ENCODE measurements at regions of chr19 and their contacts with region 1.

Region 1: DNA sequence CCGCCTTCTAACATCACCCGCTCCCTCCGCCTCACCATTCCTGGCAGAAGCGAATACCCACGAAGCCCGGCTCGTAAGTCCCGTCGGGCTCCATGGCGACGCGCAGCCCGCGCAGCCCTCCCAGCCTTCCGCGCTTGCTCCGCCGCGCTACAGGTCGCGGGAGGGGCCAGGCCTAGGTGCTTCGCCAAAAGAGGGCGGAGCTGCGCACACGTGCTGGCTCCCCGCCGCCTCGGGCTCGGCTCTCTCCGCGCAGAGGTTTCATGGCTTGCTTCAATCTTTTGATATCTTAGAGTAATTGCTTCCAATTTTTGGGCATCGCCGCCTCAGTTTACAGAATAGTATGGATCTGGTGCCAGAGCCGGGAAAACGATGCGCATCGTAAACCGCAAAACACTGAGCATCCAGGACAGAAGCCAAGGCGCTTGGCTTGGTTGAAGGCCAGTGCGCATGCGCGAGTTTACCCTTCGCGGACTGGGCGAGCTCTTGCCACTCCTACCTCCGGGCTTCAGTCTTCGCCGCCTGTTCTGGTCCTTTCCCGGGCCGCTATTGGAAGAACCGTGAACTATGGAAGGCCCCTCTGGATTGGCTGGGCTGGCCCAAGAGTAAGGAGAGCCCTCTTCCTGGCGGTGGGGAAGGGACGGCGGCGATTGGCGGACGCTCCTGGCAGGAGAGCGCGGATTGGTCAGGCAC is at the start of gene POLR2I:
- DNase-seq: peak; percentile 100
- ATAC-seq: peak; percentile 85 to 96
- H3K4me3 ChIP-seq: peak within 1 kb of the TSS; percentile 75
- H3K27ac ChIP-seq: peak within 1 kb of the TSS; percentile 89 to 91
- H3K4me1 ChIP-seq: peaks cover 25% of the 10 kb centered on the region
- CTCF ChIP-seq: no peak
- EP300 ChIP-seq: no peak
- POLR2A ChIP-seq: peak; percentile 89
- RAD21 ChIP-seq: no peak
- polyA plus RNA-seq, gene POLR2I: 107 and 123 TPM in 2 replicates

Region 2: DNA sequence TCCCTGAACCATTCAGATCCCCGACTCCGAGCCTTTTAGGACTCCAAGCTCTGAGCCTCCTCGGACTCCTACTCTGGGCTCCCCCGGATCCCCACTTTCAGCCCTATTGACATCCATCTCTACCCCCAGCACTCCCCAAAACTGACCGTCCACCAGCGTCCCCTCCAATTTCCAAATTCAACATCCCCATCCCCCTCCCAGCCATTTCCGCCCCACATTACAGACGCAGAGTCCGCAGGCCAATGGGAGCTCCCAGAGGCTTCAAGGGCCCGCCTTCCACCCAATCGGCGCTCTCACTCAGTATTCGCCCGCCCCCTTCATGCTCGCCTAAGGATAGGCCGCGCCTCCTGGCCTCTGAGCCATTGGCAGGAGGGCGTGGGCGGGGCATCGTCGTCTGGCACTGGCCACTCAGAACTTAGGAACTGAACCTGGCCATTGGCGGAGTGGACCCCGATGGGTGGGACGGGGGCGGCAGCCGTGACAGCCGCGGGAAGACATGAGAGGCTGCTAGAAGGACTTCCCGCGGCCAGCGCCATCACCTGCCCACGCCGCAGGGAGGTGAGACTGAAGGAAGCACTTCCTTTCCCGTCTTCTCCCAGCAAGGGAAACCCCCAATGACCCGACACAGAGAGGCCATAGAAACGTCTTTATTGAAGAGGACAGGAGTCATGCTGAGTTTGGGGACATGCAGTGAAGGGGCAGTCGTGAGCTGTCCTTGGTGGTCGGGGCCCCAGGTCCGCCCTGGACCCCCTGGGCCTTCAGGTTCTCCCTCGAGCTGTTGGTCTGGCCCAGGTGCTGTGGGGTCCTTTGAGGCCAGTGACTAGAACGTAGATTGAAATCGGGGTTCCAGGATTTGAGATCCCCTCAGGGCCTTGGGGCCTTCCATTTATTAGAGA is 100.6 kb before region 1 on chr19 and contains the start of gene ALKBH6:
- CTCF ChIA-PET with region 1: no interaction called
- POLR2A ChIA-PET with region 1: interaction called, 14 read pairs
- DNase-seq: peak; percentile 100
- ATAC-seq: peak; percentile 88 to 98
- H3K4me3 ChIP-seq: peak within 1 kb of the TSS; percentile 65
- H3K27ac ChIP-seq: peak within 1 kb of the TSS; percentile 81 to 85
- H3K4me1 ChIP-seq: peaks cover 19% of the 10 kb centered on the region
- CTCF ChIP-seq: no peak
- EP300 ChIP-seq: no peak
- POLR2A ChIP-seq: peak; percentile 80
- RAD21 ChIP-seq: 0 out of 5 replicates have a peak, but pooled peaks of 1 of the 2 experiments have one; percentile 23
- polyA plus RNA-seq, gene ALKBH6: 27.5 and 34.2 TPM in 2 replicates

Region 3: GRCh38 chr19:36054119-36054732 is 60.7 kb before region 1 on chr19 and contains the start of gene THAP8:
- CTCF ChIA-PET with region 1: interaction called, 157 read pairs
- POLR2A ChIA-PET with region 1: interaction called, 57 read pairs
- DNase-seq: peak; percentile 100
- ATAC-seq: peak; percentile 82 to 88
- H3K4me3 ChIP-seq: peak within 1 kb of the TSS; percentile 84
- H3K27ac ChIP-seq: peak within 1 kb of the TSS; percentile 89 to 93
- H3K4me1 ChIP-seq: peaks cover 22% of the 10 kb centered on the region
- CTCF ChIP-seq: peak; percentile 54
- EP300 ChIP-seq: no peak; a peak in 1 of 5 replicates
- POLR2A ChIP-seq: peak; percentile 93
- RAD21 ChIP-seq: peak in 1 of 2 experiments; percentile 17; a peak in 2 of 5 replicates
- polyA plus RNA-seq, gene THAP8: 3.1 and 3.2 TPM in 2 replicates

Region 4: GRCh38 chr19:36103626-36104552 is 11.0 kb before region 1 on chr19:
- CTCF ChIA-PET with region 1: interaction called, 33 read pairs
- POLR2A ChIA-PET with region 1: interaction called, 52 read pairs
- DNase-seq: peak in 1 of 2 experiments; percentile 38
- ATAC-seq: peak; percentile 3 to 7; a peak in 4 of 6 replicates
- H3K4me3 ChIP-seq: no peak overlapping the region
- H3K27ac ChIP-seq: no peak overlapping the region
- H3K4me1 ChIP-seq: peaks cover 5% of the 10 kb centered on the region; the same call in 2 of the 3 replicates
- CTCF ChIP-seq: no peak
- EP300 ChIP-seq: no peak
- POLR2A ChIP-seq: no peak
- RAD21 ChIP-seq: no peak

Region 5: DNA sequence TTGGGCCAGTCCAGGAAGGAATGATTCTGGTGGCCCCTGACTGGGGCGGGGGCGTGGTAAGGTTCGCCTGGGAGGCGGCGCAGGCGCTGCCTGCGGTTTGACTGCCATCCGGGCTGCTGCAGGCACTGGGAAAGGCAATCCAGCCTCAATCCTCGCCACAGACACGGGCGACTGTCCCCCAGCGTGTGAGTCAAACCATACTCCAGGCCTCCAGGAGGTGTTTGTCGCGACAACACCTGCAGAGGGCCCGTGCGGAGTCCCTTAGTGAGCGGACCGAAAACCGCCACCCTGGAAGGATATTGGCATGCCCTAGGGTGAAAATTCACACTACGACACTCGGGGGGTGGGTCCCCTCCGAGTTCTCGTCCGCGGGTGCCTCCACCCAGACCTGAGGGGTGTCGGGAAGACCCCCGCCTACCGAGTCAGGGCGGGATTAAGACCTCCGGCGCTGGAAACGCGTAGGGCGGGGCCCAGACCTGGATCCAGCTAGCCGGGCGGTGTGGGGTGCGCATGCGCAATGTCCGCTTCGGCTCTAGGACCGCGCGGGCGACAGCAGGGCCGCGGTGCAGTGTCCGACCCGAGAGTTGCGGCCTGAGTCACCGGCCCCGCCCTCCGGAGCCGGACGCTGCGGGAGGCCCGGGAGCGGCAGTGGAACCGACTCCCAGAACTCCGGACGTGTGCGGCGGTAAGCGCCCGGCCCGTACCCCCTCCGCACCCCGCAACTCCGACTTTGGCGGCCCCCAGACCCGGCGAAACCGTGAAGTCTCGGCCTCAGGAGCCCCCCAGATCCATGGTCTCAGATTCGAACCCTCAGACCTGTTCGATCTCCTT is 24.8 kb after region 1 on chr19 and contains the start of gene CAPNS1:
- CTCF ChIA-PET with region 1: interaction called, 3 read pairs
- POLR2A ChIA-PET with region 1: interaction called, 25 read pairs
- DNase-seq: peak; percentile 99
- ATAC-seq: peak; percentile 77 to 85
- H3K4me3 ChIP-seq: peak within 1 kb of the TSS; percentile 75
- H3K27ac ChIP-seq: peak within 1 kb of the TSS; percentile 93 to 95
- H3K4me1 ChIP-seq: peaks cover 37% of the 10 kb centered on the region
- CTCF ChIP-seq: peak; percentile 17; the same call in 1 of the 3 replicates
- EP300 ChIP-seq: no peak; a peak in 1 of 5 replicates
- POLR2A ChIP-seq: peak; percentile 83
- RAD21 ChIP-seq: peak in 1 of 2 experiments; percentile 7; a peak in 1 of 5 replicates
- polyA plus RNA-seq, gene CAPNS1: 1,014 and 1,236 TPM in 2 replicates

Region 6: DNA sequence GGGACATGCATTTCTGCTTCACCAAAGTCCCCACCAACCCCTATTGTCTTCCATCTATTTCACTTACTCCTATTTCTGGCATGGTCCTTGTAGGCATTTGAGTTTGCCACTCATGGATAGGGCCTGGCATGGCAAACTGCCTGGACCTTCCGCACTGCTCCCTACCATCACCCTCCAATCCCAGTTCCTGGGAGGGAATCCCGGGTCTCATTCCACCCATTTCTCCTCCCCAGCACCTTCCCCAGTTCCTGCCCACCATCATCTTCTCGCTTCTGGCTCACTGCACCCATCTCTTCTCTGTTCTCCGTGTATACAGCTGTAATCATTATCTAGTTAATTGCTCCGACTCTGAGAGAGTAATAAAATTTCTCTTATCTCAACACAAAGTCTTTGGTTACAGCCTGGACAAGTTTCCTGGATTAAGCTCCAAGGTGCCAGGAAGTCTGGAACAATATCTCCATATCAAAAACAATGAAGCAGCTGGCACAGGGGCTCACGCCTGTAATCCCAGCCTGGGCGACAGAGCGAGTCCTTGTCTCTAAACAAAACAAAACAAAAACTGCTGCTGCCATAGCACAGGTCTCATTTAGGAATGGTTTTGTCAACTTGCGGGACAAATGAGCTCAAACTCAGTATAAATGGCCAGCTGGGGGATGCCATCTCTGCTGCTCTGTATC is 54.3 kb after region 1 on chr19:
- CTCF ChIA-PET with region 1: interaction called, 10 read pairs
- POLR2A ChIA-PET with region 1: interaction called, 3 read pairs
- DNase-seq: no peak
- ATAC-seq: no peak
- H3K4me3 ChIP-seq: no peak overlapping the region
- H3K27ac ChIP-seq: no peak overlapping the region
- H3K4me1 ChIP-seq: 0 out of 3 replicates have a peak, but pooled peaks cover 3% of the 10 kb centered on the region
- CTCF ChIP-seq: no peak
- EP300 ChIP-seq: no peak
- POLR2A ChIP-seq: no peak
- RAD21 ChIP-seq: no peak

Region 7: GRCh38 chr19:36182612-36183244 is 67.8 kb after region 1 on chr19:
- CTCF ChIA-PET with region 1: no interaction called
- POLR2A ChIA-PET with region 1: no interaction called
- DNase-seq: peak in 1 of 2 experiments; percentile 35
- ATAC-seq: peak; percentile 19 to 22; a peak in 3 of 6 replicates
- H3K4me3 ChIP-seq: no peak overlapping the region
- H3K27ac ChIP-seq: no peak overlapping the region
- H3K4me1 ChIP-seq: no peaks in the 10 kb centered on the region
- CTCF ChIP-seq: no peak
- EP300 ChIP-seq: no peak
- POLR2A ChIP-seq: no peak
- RAD21 ChIP-seq: no peak

Region 8: GRCh38 chr19:36214386-36215275 is 99.7 kb after region 1 on chr19 and contains the starts of genes ZNF146 and ZNF565:
- CTCF ChIA-PET with region 1: no interaction called
- POLR2A ChIA-PET with region 1: interaction called, 19 read pairs
- DNase-seq: peak; percentile 100
- ATAC-seq: peak; percentile 95 to 96
- H3K4me3 ChIP-seq: peak within 1 kb of the TSS; percentile 63
- H3K27ac ChIP-seq: peak within 1 kb of the TSS; percentile 87 to 91
- H3K4me1 ChIP-seq: 0 out of 3 replicates have a peak, but pooled peaks cover 3% of the 10 kb centered on the region
- CTCF ChIP-seq: no peak
- EP300 ChIP-seq: no peak
- POLR2A ChIP-seq: peak; percentile 97
- RAD21 ChIP-seq: no peak
- polyA plus RNA-seq, gene ZNF146: 293 and 362 TPM in 2 replicates
- polyA plus RNA-seq, gene ZNF565: 5.6 and 6.8 TPM in 2 replicates

Region 9: DNA sequence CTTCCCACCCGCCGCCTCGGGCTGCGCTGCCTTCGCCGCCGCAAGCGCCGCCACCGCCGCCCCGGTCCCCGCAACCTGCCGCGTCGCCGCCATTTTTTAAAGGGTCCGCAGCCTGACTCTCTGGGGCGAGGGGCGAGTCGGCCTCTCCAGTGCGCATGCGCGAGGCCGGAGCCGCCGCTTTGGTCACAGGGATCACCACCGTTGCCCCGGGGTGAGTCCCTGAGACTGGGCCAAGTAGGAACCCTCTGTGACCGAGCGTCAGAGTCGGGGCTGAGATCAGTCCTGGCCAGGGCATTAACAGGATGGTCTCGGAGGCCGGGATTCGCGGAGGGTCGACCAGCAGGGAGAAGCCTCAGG is 142.6 kb after region 1 on chr19:
- CTCF ChIA-PET with region 1: no interaction called
- POLR2A ChIA-PET with region 1: no interaction called
- DNase-seq: no peak
- ATAC-seq: no peak
- H3K4me3 ChIP-seq: no peak overlapping the region
- H3K27ac ChIP-seq: no peak overlapping the region
- H3K4me1 ChIP-seq: no peaks in the 10 kb centered on the region
- CTCF ChIP-seq: no peak
- EP300 ChIP-seq: no peak
- POLR2A ChIP-seq: no peak
- RAD21 ChIP-seq: no peak

Measured in A549 (cell line).